ENCODE measurements at regions of chr14 and their contacts with region 1.

Region 1: GRCh38 chr14:35814371-35815005 is 5.4 kb upstream of the RALGAPA1 start:
- DNase-seq: peak; percentile 88
- ATAC-seq: peak; percentile 86
- H3K4me3 ChIP-seq: no peak overlapping the region
- H3K27ac ChIP-seq: no peak overlapping the region
- H3K4me1 ChIP-seq: peaks cover 19% of the 10 kb centered on the region
- H3K27me3 ChIP-seq: no peaks in the 10 kb centered on the region
- CTCF ChIP-seq: peak; percentile 94
- EP300 ChIP-seq: no peak
- POLR2A ChIP-seq: no peak
- RAD21 ChIP-seq: peak; percentile 64

Region 2: GRCh38 chr14:35416108-35416750 is 398.3 kb before region 1 on chr14:
- CTCF ChIA-PET with region 1: no interaction called
- POLR2A ChIA-PET with region 1: no interaction called
- in situ Hi-C with region 1: no loop called
- intact Hi-C with region 1: loop called (anchors 5 kb)
- DNase-seq: no peak
- ATAC-seq: no peak
- H3K4me3 ChIP-seq: peak overlapping the region in 1 of 3 experiments; percentile 14; a peak in 1 of 6 replicates
- H3K27ac ChIP-seq: no peak overlapping the region
- H3K4me1 ChIP-seq: peaks cover 73% of the 10 kb centered on the region
- H3K27me3 ChIP-seq: peaks cover 4 to 12% of the 10 kb centered on the region in 2 experiments; a peak in 3 of 5 replicates
- CTCF ChIP-seq: no peak
- EP300 ChIP-seq: no peak
- POLR2A ChIP-seq: no peak
- RAD21 ChIP-seq: no peak

Region 3: DNA sequence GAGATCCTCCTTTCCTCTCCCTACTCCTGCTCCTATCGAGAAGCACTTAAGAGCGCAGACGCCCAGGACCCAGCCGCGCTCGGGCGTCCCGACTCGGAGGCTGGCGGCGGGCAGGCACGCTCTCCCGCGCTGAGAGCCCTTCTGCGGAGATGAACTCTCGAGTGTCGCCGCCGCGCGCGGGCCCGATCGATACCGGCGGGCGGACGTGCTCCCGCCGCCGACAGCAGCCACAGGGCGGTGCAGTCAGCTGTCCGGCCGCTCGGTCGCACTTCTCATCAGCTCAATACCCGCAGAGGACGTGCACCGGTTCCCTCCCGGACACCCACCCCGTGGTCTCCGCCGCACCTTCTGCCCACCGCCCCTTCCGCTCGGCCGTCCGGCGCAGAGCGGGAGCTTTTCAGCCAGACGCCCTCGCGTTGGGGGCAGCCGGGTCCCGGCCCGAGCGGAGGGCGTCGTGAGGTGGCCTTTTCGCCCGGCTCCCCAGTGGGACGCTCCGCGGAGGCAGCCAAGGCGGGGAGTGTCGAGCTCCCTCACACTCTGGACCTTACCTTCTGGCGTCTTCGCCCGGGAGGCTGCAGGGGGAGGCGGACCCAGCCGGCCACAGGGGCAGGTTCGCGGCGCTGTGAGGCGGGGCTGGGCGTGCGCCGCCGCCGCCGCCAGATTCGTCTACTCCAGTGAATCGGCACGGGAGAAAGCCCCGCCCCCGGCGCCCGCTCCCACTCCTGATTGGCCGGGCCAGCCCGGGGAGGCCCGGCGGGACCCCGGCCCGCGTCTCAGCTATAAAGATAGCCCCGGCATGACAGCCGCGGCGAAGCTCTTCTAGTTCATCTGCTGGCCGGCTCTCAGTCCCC is 280.9 kb before region 1 on chr14 and contains the start of gene INSM2:
- CTCF ChIA-PET with region 1: interaction called, 3 read pairs
- POLR2A ChIA-PET with region 1: no interaction called
- in situ Hi-C with region 1: loop called (anchors 10 kb)
- intact Hi-C with region 1: loop called (anchors 5 kb)
- DNase-seq: peak; percentile 70
- ATAC-seq: peak; percentile 84
- H3K4me3 ChIP-seq: peak within 1 kb of the TSS; percentile 62 to 80 (median 63)
- H3K27ac ChIP-seq: no peak within 1 kb of the TSS
- H3K4me1 ChIP-seq: peaks cover 20% of the 10 kb centered on the region
- H3K27me3 ChIP-seq: peaks cover 11 to 55% of the 10 kb centered on the region in 2 experiments
- CTCF ChIP-seq: peak; percentile 58
- EP300 ChIP-seq: no peak
- POLR2A ChIP-seq: no peak
- RAD21 ChIP-seq: peak; percentile 38
- total RNA-seq, gene INSM2: not detected in 2 replicates

Region 4: DNA sequence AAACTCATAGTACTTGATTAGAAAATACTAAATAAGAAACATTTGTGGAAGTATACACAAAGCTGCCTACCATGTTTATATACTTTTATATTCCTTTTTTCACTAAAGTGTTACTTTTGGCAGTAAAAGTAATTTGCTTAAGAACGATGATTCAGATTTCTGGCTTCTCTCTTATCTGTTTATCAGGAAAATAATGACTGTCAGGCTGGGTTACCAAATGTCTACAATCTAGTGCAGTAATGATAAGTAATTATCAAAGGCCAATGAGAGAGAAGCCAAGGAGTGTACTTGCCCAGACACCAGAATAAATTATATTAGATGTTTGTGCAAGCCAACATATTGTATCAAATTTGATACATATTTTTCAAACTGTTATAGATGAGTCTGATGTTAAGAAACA is 118.8 kb before region 1 on chr14:
- CTCF ChIA-PET with region 1: no interaction called
- POLR2A ChIA-PET with region 1: no interaction called
- in situ Hi-C with region 1: loop called (anchors 10 kb)
- intact Hi-C with region 1: no loop called
- DNase-seq: no peak
- ATAC-seq: no peak
- H3K4me3 ChIP-seq: no peak overlapping the region
- H3K27ac ChIP-seq: no peak overlapping the region
- H3K4me1 ChIP-seq: no peaks in the 10 kb centered on the region
- H3K27me3 ChIP-seq: no peaks in the 10 kb centered on the region
- CTCF ChIP-seq: no peak
- EP300 ChIP-seq: no peak
- POLR2A ChIP-seq: no peak
- RAD21 ChIP-seq: no peak

Region 5: DNA sequence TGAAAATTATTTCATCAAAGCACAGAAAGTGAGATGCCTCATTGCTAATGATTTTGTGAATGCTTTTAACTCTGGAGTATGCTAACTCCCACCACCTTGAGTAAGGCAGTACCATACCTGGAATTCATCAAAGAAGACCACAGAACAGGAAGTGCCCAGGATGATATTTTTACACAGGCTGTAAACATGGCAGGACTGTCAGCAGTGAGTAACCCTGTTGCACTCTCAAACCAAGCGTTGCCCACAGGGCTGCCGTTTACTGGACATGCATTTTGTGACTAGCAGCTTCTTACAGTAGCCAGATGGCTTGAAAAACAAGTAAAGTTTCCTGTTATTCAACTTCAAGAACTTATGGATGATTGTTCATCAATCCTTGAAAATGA is 47.8 kb before region 1 on chr14:
- CTCF ChIA-PET with region 1: no interaction called
- POLR2A ChIA-PET with region 1: no interaction called
- in situ Hi-C with region 1: no loop called
- intact Hi-C with region 1: loop called (anchors 2 kb)
- DNase-seq: no peak
- ATAC-seq: no peak
- H3K4me3 ChIP-seq: no peak overlapping the region
- H3K27ac ChIP-seq: no peak overlapping the region
- H3K4me1 ChIP-seq: no peaks in the 10 kb centered on the region
- H3K27me3 ChIP-seq: no peaks in the 10 kb centered on the region
- CTCF ChIP-seq: no peak
- EP300 ChIP-seq: no peak
- POLR2A ChIP-seq: no peak
- RAD21 ChIP-seq: no peak

Region 6: DNA sequence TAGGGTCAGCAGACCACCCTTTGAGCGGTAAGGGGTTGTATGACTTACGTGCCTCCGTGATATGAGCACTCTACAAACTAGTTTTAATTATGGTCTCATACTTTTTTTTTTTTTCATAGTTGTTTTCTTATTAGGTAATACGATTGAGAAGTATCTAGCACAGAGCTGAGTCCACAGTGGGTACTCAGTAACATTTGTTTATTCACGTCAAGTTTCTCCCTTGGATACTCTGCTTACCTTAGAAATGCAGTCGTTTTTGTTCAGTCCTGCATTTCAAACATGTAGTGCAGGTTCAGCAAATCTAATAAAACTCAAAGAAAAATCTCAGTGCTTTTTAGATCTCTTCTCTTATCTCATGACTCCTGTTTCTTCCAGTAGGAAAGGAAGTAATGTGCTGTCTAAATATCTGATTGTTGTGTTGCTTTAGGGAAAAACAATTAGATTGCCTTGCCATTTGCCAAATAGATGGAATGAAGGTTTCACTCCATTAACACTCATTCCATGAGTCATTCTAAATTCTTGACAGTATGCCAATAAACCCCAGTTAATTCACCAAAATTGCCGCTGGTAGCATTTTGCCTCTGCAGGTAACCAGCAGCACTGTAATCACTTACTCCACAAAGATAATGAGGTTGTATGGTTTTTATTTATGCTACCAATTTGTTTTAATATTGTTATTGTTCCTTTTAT is 243.1 kb after region 1 on chr14:
- CTCF ChIA-PET with region 1: no interaction called
- POLR2A ChIA-PET with region 1: no interaction called
- in situ Hi-C with region 1: no loop called
- intact Hi-C with region 1: no loop called
- DNase-seq: no peak
- ATAC-seq: no peak
- H3K4me3 ChIP-seq: no peak overlapping the region
- H3K27ac ChIP-seq: no peak overlapping the region
- H3K4me1 ChIP-seq: no peaks in the 10 kb centered on the region
- H3K27me3 ChIP-seq: peaks cover 2 to 4% of the 10 kb centered on the region in 2 experiments; a peak in 1 of 5 replicates
- CTCF ChIP-seq: no peak
- EP300 ChIP-seq: no peak
- POLR2A ChIP-seq: no peak
- RAD21 ChIP-seq: no peak